ENCODE measurements at regions of chrX and their contacts with region 1.

Region 1: GRCh38 chrX:68146054-68146453 is 287.2 kb downstream of the OPHN1 start:
- H3K4me3 Mint-ChIP-seq: no peak overlapping the region
- H3K27ac Mint-ChIP-seq: no peak overlapping the region
- H3K4me1 Mint-ChIP-seq: peaks cover 10% of the 10 kb centered on the region
- H3K27me3 Mint-ChIP-seq: no peaks in the 10 kb centered on the region

Region 2: DNA sequence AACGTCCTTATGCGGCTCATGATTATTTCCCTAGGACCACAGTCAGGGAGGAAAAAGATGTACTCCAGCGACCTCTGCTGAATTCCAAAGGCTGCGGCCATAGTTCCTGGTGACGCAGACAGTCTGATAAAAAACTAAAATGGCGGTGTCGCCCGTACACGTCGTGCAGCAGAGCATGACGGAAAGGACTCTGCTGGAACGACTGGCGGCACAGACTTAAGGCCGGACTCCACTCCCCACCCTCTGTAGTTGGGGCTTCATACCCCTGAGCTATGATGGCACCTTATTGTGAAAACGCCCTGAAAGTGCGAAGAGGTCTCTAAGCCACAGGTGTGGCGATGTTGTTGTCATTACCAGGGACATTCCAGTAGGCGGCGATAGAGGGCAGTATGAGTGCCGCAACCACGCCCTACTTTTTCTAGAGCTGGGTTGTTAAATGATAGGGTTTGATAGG is 1417.2 kb before region 1 on chrX:
- intact Hi-C with region 1: loop called (anchors 5 kb)
- H3K4me3 Mint-ChIP-seq: peak overlapping the region; percentile 78
- H3K27ac Mint-ChIP-seq: peak overlapping the region; percentile 66
- H3K4me1 Mint-ChIP-seq: no peaks in the 10 kb centered on the region
- H3K27me3 Mint-ChIP-seq: no peaks in the 10 kb centered on the region

Region 3: GRCh38 chrX:67555578-67556203 is 590.4 kb before region 1 on chrX:
- intact Hi-C with region 1: loop called (anchors 1 kb)
- H3K4me3 Mint-ChIP-seq: no peak overlapping the region
- H3K27ac Mint-ChIP-seq: no peak overlapping the region
- H3K4me1 Mint-ChIP-seq: no peaks in the 10 kb centered on the region
- H3K27me3 Mint-ChIP-seq: no peaks in the 10 kb centered on the region

Region 4: GRCh38 chrX:68018681-68019111 is 127.4 kb before region 1 on chrX:
- intact Hi-C with region 1: loop called (anchors 2 kb)
- H3K4me3 Mint-ChIP-seq: no peak overlapping the region
- H3K27ac Mint-ChIP-seq: no peak overlapping the region
- H3K4me1 Mint-ChIP-seq: no peaks in the 10 kb centered on the region
- H3K27me3 Mint-ChIP-seq: no peaks in the 10 kb centered on the region

Region 5: DNA sequence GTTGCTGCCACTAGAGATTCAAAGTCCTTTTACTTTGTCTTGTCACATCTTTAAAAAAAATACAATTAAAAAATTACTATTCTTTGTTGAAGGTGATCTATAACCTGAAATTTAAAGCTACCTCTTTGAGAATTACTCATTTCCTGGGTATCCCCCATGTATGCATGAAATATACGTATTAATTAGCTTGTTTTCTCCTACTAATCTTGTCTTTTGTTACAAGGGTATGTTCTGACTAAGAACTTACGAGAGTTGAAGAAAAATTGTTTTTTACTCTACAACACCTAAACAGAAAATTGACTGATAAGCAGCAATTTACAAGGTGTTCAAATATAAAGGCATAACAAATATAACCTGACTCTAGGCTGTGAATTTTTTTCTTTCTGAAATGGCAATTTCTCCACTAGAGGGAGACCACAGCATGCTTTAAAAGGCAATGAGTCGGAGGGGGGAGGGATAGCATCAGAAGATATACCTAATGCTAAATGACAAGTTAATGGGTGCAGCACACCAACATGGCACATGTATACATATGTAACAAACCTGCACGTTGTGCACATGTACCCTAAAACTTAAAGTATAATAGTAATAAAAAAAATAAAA is 37.7 kb after region 1 on chrX:
- intact Hi-C with region 1: no loop called
- H3K4me3 Mint-ChIP-seq: no peak overlapping the region
- H3K27ac Mint-ChIP-seq: no peak overlapping the region
- H3K4me1 Mint-ChIP-seq: peaks cover 24% of the 10 kb centered on the region
- H3K27me3 Mint-ChIP-seq: no peaks in the 10 kb centered on the region

Measured in dendritic cell treated with granulocyte-macrophage colony-stimulating factor and Interleukin-4, amounts not matched to agents 40 ng/mL and 50 ng/mL, for 4 days (primary cell).